MCF 10A (cell line): ENCODE measurements at regions of chr1 and their contacts with region 1.

Region 1: GRCh38 chr1:62407405-62408009 is 29.3 kb upstream of the USP1 start:
- DNase-seq: peak; percentile 75
- H3K4me3 Mint-ChIP-seq: no peak overlapping the region
- H3K27ac Mint-ChIP-seq: no peak overlapping the region
- H3K4me1 Mint-ChIP-seq: peaks cover 6% of the 10 kb centered on the region
- H3K27me3 Mint-ChIP-seq: no peaks in the 10 kb centered on the region
- CTCF ChIP-seq: peak; percentile 62

Region 2: DNA sequence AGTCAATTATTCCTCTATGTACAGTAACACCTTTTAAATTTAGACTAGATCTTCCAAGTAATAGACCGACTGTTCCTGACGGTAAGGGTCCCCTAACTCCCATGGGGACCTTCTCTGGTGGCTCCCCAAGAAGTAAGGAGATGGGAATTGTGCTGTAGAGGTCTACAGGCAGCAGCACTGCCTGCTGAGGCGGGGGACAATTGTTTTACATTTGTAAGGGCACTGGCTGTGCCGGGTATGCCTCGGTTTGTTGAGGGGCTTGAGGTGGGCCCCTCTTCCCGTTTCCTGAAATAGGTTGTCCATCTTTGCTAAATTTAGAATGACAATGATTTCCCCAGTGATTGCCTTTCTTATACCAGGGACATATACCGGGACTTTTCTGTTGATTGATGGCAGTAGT is 226.0 kb before region 1 on chr1:
- CTCF ChIA-PET with region 1: interaction called, 241 read pairs
- POLR2A ChIA-PET with region 1: interaction called, 3 read pairs
- intact Hi-C with region 1: no loop called
- DNase-seq: no peak
- H3K4me3 Mint-ChIP-seq: no peak overlapping the region
- H3K27ac Mint-ChIP-seq: no peak overlapping the region
- H3K4me1 Mint-ChIP-seq: no peaks in the 10 kb centered on the region
- H3K27me3 Mint-ChIP-seq: no peaks in the 10 kb centered on the region
- CTCF ChIP-seq: no peak

Region 3: GRCh38 chr1:62209931-62210595 is 197.4 kb before region 1 on chr1:
- CTCF ChIA-PET with region 1: interaction called, 5 read pairs
- POLR2A ChIA-PET with region 1: no interaction called
- intact Hi-C with region 1: loop called (anchors 1 kb)
- DNase-seq: peak; percentile 70
- H3K4me3 Mint-ChIP-seq: no peak overlapping the region
- H3K27ac Mint-ChIP-seq: no peak overlapping the region
- H3K4me1 Mint-ChIP-seq: peaks cover 12% of the 10 kb centered on the region
- H3K27me3 Mint-ChIP-seq: no peaks in the 10 kb centered on the region
- CTCF ChIP-seq: peak; percentile 15

Region 4: DNA sequence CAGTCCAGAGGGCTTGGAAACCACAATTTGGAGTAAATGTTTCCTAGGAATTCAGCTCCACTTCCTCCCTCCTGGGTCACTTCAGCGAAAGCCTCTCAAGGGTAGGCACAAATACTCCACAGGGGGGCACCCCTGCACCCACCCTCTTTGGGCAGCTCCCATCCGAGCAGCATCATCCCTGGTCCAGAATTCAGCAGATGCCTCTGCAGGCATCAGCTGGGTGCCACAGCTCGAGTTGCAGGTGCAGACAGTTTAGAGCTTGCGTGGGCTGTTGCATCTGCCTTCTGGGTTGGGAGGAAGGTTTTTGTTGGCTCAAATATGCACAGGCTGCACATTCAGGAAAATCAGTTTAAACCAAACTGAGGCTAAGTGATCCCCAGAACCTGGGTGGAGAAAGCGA is 113.2 kb before region 1 on chr1:
- CTCF ChIA-PET with region 1: interaction called, 5 read pairs
- POLR2A ChIA-PET with region 1: no interaction called
- intact Hi-C with region 1: loop called (anchors 1 kb)
- DNase-seq: peak; percentile 55
- H3K4me3 Mint-ChIP-seq: no peak overlapping the region
- H3K27ac Mint-ChIP-seq: no peak overlapping the region
- H3K4me1 Mint-ChIP-seq: peaks cover 11% of the 10 kb centered on the region
- H3K27me3 Mint-ChIP-seq: no peaks in the 10 kb centered on the region
- CTCF ChIP-seq: peak; percentile 23

Region 5: DNA sequence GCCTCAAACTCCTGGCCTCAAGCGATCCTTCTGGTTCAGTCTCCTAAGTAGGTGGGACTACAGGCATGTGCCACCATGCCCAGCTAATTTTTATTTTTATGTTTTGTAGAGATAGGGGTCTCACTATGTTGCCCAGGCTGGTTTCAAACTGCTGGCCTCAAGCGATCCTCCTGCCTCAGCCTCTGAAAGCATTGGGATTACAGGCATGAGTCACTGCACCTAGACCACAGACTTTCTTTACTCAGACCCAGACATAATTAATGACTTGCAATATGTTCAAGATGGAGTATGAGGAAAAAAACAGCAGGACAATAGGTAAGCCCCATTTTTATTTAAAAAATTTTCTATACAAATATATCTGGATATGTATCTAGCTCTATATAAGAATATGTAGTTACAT is 101.4 kb before region 1 on chr1:
- CTCF ChIA-PET with region 1: no interaction called
- POLR2A ChIA-PET with region 1: no interaction called
- intact Hi-C with region 1: no loop called
- DNase-seq: no peak
- H3K4me3 Mint-ChIP-seq: no peak overlapping the region
- H3K27ac Mint-ChIP-seq: no peak overlapping the region
- H3K4me1 Mint-ChIP-seq: peaks cover 6% of the 10 kb centered on the region
- H3K27me3 Mint-ChIP-seq: no peaks in the 10 kb centered on the region
- CTCF ChIP-seq: no peak

Region 6: GRCh38 chr1:62318756-62319544 is 88.6 kb before region 1 on chr1 and contains the start of gene KANK4:
- CTCF ChIA-PET with region 1: no interaction called
- POLR2A ChIA-PET with region 1: no interaction called
- intact Hi-C with region 1: no loop called
- DNase-seq: no peak
- H3K4me3 Mint-ChIP-seq: peak within 1 kb of the TSS; percentile 47
- H3K27ac Mint-ChIP-seq: no peak within 1 kb of the TSS
- H3K4me1 Mint-ChIP-seq: peaks cover 14% of the 10 kb centered on the region
- H3K27me3 Mint-ChIP-seq: no peaks in the 10 kb centered on the region
- CTCF ChIP-seq: no peak
- total RNA-seq, gene KANK4: 0.20 and 0.51 TPM in 2 replicates

Region 7: GRCh38 chr1:62346886-62347285 is 60.6 kb before region 1 on chr1:
- CTCF ChIA-PET with region 1: no interaction called
- POLR2A ChIA-PET with region 1: no interaction called
- intact Hi-C with region 1: no loop called
- DNase-seq: no peak
- H3K4me3 Mint-ChIP-seq: no peak overlapping the region
- H3K27ac Mint-ChIP-seq: no peak overlapping the region
- H3K4me1 Mint-ChIP-seq: no peaks in the 10 kb centered on the region
- H3K27me3 Mint-ChIP-seq: no peaks in the 10 kb centered on the region
- CTCF ChIP-seq: no peak